ENCODE measurements at regions of chr6 and their contacts with region 1.

Region 1: GRCh38 chr6:139846538-139847456 is 472.3 kb upstream of the CITED2 start:
- DNase-seq: peak; percentile 36 to 43 (median 42)
- H3K4me3 ChIP-seq: peak overlapping the region in 2 of 3 experiments; percentile 19 to 60
- H3K4me3 Mint-ChIP-seq: peak overlapping the region; percentile 25 to 87
- H3K27ac ChIP-seq: peak overlapping the region; percentile 36 to 82
- H3K27ac Mint-ChIP-seq: peak overlapping the region; percentile 88 to 95 (median 93)
- H3K4me1 ChIP-seq: peaks cover 28 to 40% of the 10 kb centered on the region in 2 donors
- H3K4me1 Mint-ChIP-seq: peaks cover 38% of the 10 kb centered on the region
- H3K27me3 ChIP-seq: no peaks in the 10 kb centered on the region
- H3K27me3 Mint-ChIP-seq: no peaks in the 10 kb centered on the region
- CTCF ChIP-seq: no peak

Region 2: DNA sequence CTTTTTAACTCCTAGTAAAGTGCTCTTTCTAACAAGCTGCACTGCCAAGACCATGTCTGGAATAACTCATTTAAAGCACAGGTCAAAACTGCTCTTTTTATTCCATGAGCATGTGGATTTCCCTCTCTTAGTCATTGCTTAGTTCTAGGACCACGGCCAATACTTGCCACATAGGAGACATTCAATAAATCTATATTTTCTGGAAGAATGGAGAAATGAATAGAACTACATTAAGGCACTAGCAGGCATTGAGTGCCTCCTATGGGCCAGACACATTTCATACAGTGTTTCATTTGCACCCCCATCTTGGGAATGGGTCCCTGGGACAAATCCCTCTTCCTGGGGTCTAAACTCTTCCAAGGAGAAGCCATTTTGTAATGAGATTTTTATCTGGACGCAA is 80.4 kb after region 1 on chr6:
- intact Hi-C with region 1: loop called in 1 of 2 experiments (anchors 10 kb)
- DNase-seq: peak in 2 of 3 donors; percentile 21 to 44
- H3K4me3 ChIP-seq: no peak overlapping the region
- H3K4me3 Mint-ChIP-seq: no peak overlapping the region
- H3K27ac ChIP-seq: no peak overlapping the region
- H3K27ac Mint-ChIP-seq: no peak overlapping the region
- H3K4me1 ChIP-seq: peaks cover 0 to 2% of the 10 kb centered on the region in 2 donors
- H3K4me1 Mint-ChIP-seq: peaks cover 19% of the 10 kb centered on the region
- H3K27me3 ChIP-seq: no peaks in the 10 kb centered on the region
- H3K27me3 Mint-ChIP-seq: no peaks in the 10 kb centered on the region
- CTCF ChIP-seq: peak; percentile 51

Measured in CD14-positive monocyte (primary cell).